HEK293 (cell line): ENCODE measurements at regions of chr3 and their contacts with region 1.

Region 1: GRCh38 chr3:58217209-58217811 is 6.5 kb upstream of the DNASE1L3 start:
- H3K4me3 ChIP-seq: no peak overlapping the region
- H3K27ac ChIP-seq: no peak overlapping the region
- H3K4me1 ChIP-seq: no peaks in the 10 kb centered on the region
- CTCF ChIP-seq: no peak

Region 2: DNA sequence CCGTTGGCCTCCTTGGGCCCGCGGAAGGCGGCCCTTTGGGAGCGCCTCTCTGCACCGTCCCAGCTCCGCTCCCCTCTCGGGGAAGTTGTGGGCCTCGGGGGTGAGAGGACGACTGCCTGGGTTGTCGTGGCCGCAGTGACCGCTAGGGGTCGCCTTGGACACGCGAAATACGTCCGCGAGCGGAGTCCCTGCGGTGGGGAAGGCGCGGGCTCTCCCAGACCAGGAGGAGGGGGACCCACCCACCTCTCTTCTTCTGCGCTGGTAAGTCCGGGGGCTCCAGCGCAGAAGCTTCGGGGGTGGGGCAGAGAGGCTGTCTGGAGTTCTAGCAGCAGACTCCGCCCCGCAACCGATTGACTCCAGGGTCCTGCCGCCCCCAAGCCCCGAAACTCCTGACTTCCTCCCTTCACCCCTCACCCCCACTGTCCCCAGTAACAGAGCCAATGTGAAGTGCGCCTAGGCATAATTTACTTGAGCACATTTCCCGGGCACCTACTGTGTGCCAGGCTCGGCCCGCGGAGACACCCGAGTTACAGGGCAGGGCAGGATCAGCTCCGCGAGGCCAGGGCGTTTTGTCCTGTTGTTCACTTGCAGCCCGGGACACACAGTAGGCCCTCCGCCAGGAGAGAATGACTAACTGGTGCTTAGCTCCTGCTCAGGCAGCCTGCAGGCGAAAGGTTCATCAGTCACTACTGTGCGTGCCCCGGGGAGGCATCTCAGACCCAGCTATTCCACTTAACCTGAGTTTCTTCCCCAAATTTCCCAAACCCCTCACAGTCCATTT is 39.4 kb before region 1 on chr3:
- CTCF ChIA-PET with region 1: interaction called, 12 read pairs
- POLR2A ChIA-PET with region 1: no interaction called
- H3K4me3 ChIP-seq: peak overlapping the region; percentile 22
- H3K27ac ChIP-seq: no peak overlapping the region
- H3K4me1 ChIP-seq: no peaks in the 10 kb centered on the region
- CTCF ChIP-seq: peak; percentile 71; the same call in 1 of the 2 replicates

Region 3: GRCh38 chr3:58230876-58231552 is 13.7 kb after region 1 on chr3:
- CTCF ChIA-PET with region 1: interaction called, 14 read pairs
- POLR2A ChIA-PET with region 1: no interaction called
- H3K4me3 ChIP-seq: no peak overlapping the region
- H3K27ac ChIP-seq: no peak overlapping the region
- H3K4me1 ChIP-seq: no peaks in the 10 kb centered on the region
- CTCF ChIP-seq: no peak